Vagina (tissue), 2 donors: ENCODE measurements at regions of chr2 and their contacts with region 1.

Region 1: GRCh38 chr2:19851116-19851695 is 50.6 kb downstream of the TTC32 start:
- DNase-seq: no peak
- H3K4me3 ChIP-seq: no peak overlapping the region
- H3K27ac ChIP-seq: no peak overlapping the region
- H3K4me1 ChIP-seq: no peaks in the 10 kb centered on the region
- H3K27me3 ChIP-seq: no peaks in the 10 kb centered on the region
- CTCF ChIP-seq: no peak
- POLR2A ChIP-seq: no peak

Region 2: GRCh38 chr2:18387441-18388206 is 1463.6 kb before region 1 on chr2:
- intact Hi-C with region 1: loop called (anchors 10 kb)
- DNase-seq: no peak
- H3K4me3 ChIP-seq: no peak overlapping the region
- H3K27ac ChIP-seq: no peak overlapping the region
- H3K4me1 ChIP-seq: no peaks in the 10 kb centered on the region
- H3K27me3 ChIP-seq: no peaks in the 10 kb centered on the region
- CTCF ChIP-seq: peak; percentile 70 to 86 (median 82)
- POLR2A ChIP-seq: no peak

Region 3: DNA sequence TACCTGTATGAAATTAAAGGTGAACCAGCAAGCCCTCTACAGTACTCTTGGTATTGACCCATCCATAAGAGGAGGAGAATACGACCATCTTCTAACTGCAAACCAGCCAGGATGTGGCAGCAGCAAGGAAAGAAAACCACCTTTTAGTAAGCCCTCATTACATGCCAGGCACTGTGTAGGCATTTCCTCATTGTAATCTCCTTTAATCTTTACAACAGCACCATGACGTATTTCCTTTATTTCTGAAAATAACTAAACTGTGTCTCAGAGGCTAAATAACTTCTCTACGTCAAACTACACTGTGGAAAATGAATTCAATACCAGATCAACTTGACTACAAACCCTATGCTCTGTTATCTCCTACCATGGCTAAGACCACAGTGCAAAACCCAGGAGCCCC is 120.5 kb after region 1 on chr2:
- intact Hi-C with region 1: no loop called
- DNase-seq: no peak
- H3K4me3 ChIP-seq: no peak overlapping the region
- H3K27ac ChIP-seq: no peak overlapping the region
- H3K4me1 ChIP-seq: no peaks in the 10 kb centered on the region
- H3K27me3 ChIP-seq: no peaks in the 10 kb centered on the region
- CTCF ChIP-seq: no peak
- POLR2A ChIP-seq: no peak